Heart left ventricle (tissue), 16 donors: ENCODE measurements at regions of chr2 and their contacts with region 1.

Region 1: GRCh38 chr2:71340176-71340575 is 8.6 kb downstream of the ZNF638 start:
- DNase-seq: no peak
- ATAC-seq: no peak
- H3K4me3 ChIP-seq: no peak overlapping the region
- H3K27ac ChIP-seq: no peak overlapping the region
- H3K4me1 ChIP-seq: peaks cover 0 to 90% (median 64%) of the 10 kb centered on the region in 12 donors
- H3K27me3 ChIP-seq: no peaks in the 10 kb centered on the region
- CTCF ChIP-seq: no peak
- POLR2A ChIP-seq: no peak

Region 2: GRCh38 chr2:70964596-70965386 is 375.4 kb before region 1 on chr2:
- intact Hi-C with region 1: no loop called
- DNase-seq: peak; percentile 47 to 84 (median 70)
- ATAC-seq: peak in 3 of 4 donors; percentile 68 to 83 (median 75)
- H3K4me3 ChIP-seq: peak overlapping the region in 10 of 12 donors; percentile 15 to 60 (median 48)
- H3K27ac ChIP-seq: no peak overlapping the region
- H3K4me1 ChIP-seq: peaks cover 0 to 12% (median 2%) of the 10 kb centered on the region in 12 donors
- H3K27me3 ChIP-seq: peaks cover 6 to 38% (median 23%) of the 10 kb centered on the region in 9 donors
- CTCF ChIP-seq: peak; percentile 67 to 85 (median 76)
- POLR2A ChIP-seq: no peak

Region 3: GRCh38 chr2:71157124-71157793 is 182.9 kb before region 1 on chr2:
- intact Hi-C with region 1: no loop called
- DNase-seq: peak; percentile 27 to 63 (median 49)
- ATAC-seq: peak; percentile 61 to 79 (median 75)
- H3K4me3 ChIP-seq: peak overlapping the region in 4 of 12 donors; percentile 11 to 24 (median 14)
- H3K27ac ChIP-seq: peak overlapping the region in 1 of 12 donors; percentile 58
- H3K4me1 ChIP-seq: peaks cover 0 to 10% (median 5%) of the 10 kb centered on the region in 12 donors
- H3K27me3 ChIP-seq: no peaks in the 10 kb centered on the region
- CTCF ChIP-seq: peak; percentile 46 to 72 (median 58)
- POLR2A ChIP-seq: no peak

Region 4: GRCh38 chr2:71379088-71379487 is 38.9 kb after region 1 on chr2:
- intact Hi-C with region 1: loop called in 1 of 10 experiments (anchors 5 kb)
- DNase-seq: no peak
- ATAC-seq: peak in 2 of 4 donors; percentile 62 to 69
- H3K4me3 ChIP-seq: no peak overlapping the region
- H3K27ac ChIP-seq: no peak overlapping the region
- H3K4me1 ChIP-seq: peaks cover 0 to 10% (median under 1%) of the 10 kb centered on the region in 12 donors
- H3K27me3 ChIP-seq: no peaks in the 10 kb centered on the region
- CTCF ChIP-seq: no peak
- POLR2A ChIP-seq: no peak